Activated CD4-positive, alpha-beta T cell treated with anti-CD3 and anti-CD28 coated beads, Interleukin-2, amount 10 ng/mL, durations not matched to agents 24 days and 14 days (primary cell): ENCODE measurements at regions of chr16 and their contacts with region 1.

Region 1: GRCh38 chr16:67063008-67063407 is 34.1 kb downstream of the CBFB start:
- DNase-seq: peak; percentile 49
- H3K4me3 Mint-ChIP-seq: peak overlapping the region; percentile 23
- H3K27ac Mint-ChIP-seq: peak overlapping the region; percentile 20
- H3K4me1 Mint-ChIP-seq: peaks cover 18% of the 10 kb centered on the region
- H3K27me3 Mint-ChIP-seq: no peaks in the 10 kb centered on the region

Region 2: GRCh38 chr16:67075331-67075730 is 12.3 kb after region 1 on chr16:
- intact Hi-C with region 1: loop called (anchors 1 kb)
- DNase-seq: no peak
- H3K4me3 Mint-ChIP-seq: no peak overlapping the region
- H3K27ac Mint-ChIP-seq: no peak overlapping the region
- H3K4me1 Mint-ChIP-seq: peaks cover 7% of the 10 kb centered on the region
- H3K27me3 Mint-ChIP-seq: no peaks in the 10 kb centered on the region